ENCODE measurements at regions of chr5 and their contacts with region 1.

Region 1: DNA sequence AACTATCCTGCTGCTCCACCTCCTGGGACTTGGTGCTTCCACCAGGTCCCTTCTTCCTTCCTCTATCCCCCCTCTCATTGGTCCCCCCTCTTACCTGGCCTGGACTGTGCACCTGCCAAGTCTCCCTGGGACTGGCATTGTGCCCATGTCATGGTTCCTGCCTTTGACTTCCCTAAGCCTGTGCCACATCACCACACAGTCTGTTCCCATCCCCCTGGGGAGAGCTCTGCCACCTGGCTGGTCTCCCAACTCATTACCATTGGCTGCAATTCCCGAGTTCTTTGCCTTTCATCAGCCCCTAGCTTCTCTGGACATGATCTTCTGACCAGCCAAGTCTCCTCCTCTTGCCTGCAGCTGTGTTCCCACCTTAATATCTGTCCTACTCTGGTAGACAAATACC is 180.3 kb downstream of the SREK1 start:
- DNase-seq: peak; percentile 66 to 89 (median 73)
- ATAC-seq: peak; percentile 81 to 90 (median 86)
- H3K4me3 ChIP-seq: no peak overlapping the region
- H3K27ac ChIP-seq: peak overlapping the region; percentile 46 to 87 (median 80)
- H3K4me1 ChIP-seq: peaks cover 0 to 41% (median 6%) of the 10 kb centered on the region in 12 donors
- H3K27me3 ChIP-seq: no peaks in the 10 kb centered on the region
- CTCF ChIP-seq: peak in 1 of 12 donors; percentile 4
- POLR2A ChIP-seq: no peak

Region 2: GRCh38 chr5:66367814-66368541 is 43.6 kb after region 1 on chr5:
- intact Hi-C with region 1: loop called in 6 of 10 experiments (anchors 2 to 10 kb)
- DNase-seq: peak in 4 of 5 donors; percentile 31 to 73 (median 56)
- ATAC-seq: peak; percentile 87 to 93 (median 90)
- H3K4me3 ChIP-seq: no peak overlapping the region
- H3K27ac ChIP-seq: peak overlapping the region; percentile 66 to 96 (median 84)
- H3K4me1 ChIP-seq: peaks cover 0 to 79% (median 20%) of the 10 kb centered on the region in 12 donors
- H3K27me3 ChIP-seq: no peaks in the 10 kb centered on the region
- CTCF ChIP-seq: no peak
- POLR2A ChIP-seq: no peak

Region 3: GRCh38 chr5:66378407-66378806 is 54.0 kb after region 1 on chr5:
- intact Hi-C with region 1: loop called in 1 of 10 experiments (anchors 10 kb)
- DNase-seq: no peak
- ATAC-seq: peak in 3 of 4 donors; percentile 45 to 66 (median 48)
- H3K4me3 ChIP-seq: no peak overlapping the region
- H3K27ac ChIP-seq: peak overlapping the region in 9 of 12 donors; percentile 1 to 72 (median 34)
- H3K4me1 ChIP-seq: peaks cover 0 to 22% (median 0%) of the 10 kb centered on the region in 12 donors
- H3K27me3 ChIP-seq: no peaks in the 10 kb centered on the region
- CTCF ChIP-seq: no peak
- POLR2A ChIP-seq: no peak